ENCODE measurements at regions of chr6 and their contacts with region 1.

Region 1: GRCh38 chr6:81752138-81752920 is at the start of gene TENT5A:
- DNase-seq: peak; percentile 93 to 95
- ATAC-seq: peak; percentile 88 to 90 (median 90)
- H3K4me3 ChIP-seq: peak within 1 kb of the TSS; percentile 75
- H3K27ac ChIP-seq: peak within 1 kb of the TSS; percentile 88
- H3K4me1 ChIP-seq: peaks cover 22% of the 10 kb centered on the region
- H3K27me3 ChIP-seq: no peaks in the 10 kb centered on the region
- CTCF ChIP-seq: no peak
- total RNA-seq, gene TENT5A: 2.1 to 4.3 (median 2.6) TPM

Region 2: DNA sequence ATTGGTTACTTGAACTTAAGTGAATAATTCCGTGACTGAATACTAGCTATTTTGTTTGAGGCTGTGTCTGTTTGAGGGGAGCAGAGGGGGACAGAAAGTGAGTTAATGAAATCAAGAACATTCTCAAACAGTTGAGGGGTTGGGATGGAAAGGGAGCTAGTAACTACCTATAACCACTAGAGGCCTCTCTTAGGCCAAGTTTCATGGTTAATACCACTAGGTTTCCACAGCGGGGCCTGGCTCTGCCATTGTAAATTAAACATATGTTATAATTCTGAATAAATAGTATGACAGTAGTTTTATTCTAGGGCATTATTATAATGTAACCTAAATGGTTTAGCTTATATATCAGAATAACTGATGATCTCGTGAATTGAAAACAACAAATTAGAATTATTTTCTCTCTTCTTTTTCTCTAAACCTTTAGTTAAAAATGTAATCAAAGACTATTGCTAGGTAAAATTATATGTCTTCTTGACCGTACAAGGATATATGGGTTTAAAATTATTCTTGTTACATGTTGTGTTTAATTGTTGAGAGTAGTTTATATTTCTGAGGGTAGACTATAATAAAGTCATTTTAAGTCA is 1537.8 kb before region 1 on chr6:
- intact Hi-C with region 1: loop called in 1 of 2 experiments (anchors 10 kb)
- DNase-seq: no peak
- ATAC-seq: peak; percentile 66 to 93 (median 85)
- H3K4me3 ChIP-seq: no peak overlapping the region
- H3K27ac ChIP-seq: no peak overlapping the region
- H3K4me1 ChIP-seq: peaks cover 14% of the 10 kb centered on the region
- H3K27me3 ChIP-seq: no peaks in the 10 kb centered on the region
- CTCF ChIP-seq: peak; percentile 79

Region 3: DNA sequence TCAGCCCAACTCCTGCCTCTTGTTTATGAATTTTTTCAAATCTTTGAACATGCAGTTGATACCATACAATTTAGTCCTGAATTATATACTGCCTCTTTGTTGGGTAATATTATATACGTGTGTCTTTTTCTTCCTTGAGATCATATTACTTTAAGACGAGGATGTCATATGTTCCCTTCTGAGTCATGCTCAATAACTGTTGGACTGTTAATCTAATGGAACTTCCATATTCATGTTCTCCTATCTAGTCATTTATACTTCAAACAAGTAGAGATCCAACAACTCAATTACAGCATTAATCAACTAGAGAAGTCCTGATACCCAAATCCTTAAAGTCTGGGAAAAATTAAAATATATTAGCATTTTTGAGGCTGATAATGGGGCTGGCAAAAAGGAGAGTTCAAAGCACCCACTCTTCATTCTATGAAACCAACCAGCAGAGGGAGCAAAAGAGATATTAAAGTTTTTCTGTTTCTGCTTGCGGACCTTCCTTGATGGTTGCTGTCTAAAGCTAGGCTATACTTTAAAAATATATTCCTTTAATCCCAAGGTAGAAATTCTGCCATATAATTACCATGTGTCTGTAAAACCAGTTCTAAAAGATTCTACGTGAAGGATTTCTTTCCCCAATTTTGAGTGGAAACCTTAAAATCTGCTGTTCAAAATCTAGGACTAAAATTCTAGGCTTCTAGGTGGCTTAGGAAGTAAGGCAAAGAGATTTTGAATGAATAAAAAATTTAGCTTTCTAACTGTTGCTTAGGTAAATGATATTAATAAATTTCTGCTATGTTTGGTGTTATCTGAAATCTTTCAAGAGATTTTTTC is 1147.0 kb before region 1 on chr6:
- intact Hi-C with region 1: loop called (anchors 5 kb)
- DNase-seq: no peak
- ATAC-seq: peak in 1 of 4 donors; percentile 65
- H3K4me3 ChIP-seq: no peak overlapping the region
- H3K27ac ChIP-seq: no peak overlapping the region
- H3K4me1 ChIP-seq: peaks cover 12% of the 10 kb centered on the region
- H3K27me3 ChIP-seq: no peaks in the 10 kb centered on the region
- CTCF ChIP-seq: peak; percentile 65

Region 4: GRCh38 chr6:81683928-81684327 is 68.4 kb before region 1 on chr6:
- intact Hi-C with region 1: no loop called
- DNase-seq: no peak
- ATAC-seq: no peak
- H3K4me3 ChIP-seq: no peak overlapping the region
- H3K27ac ChIP-seq: no peak overlapping the region
- H3K4me1 ChIP-seq: no peaks in the 10 kb centered on the region
- H3K27me3 ChIP-seq: no peaks in the 10 kb centered on the region
- CTCF ChIP-seq: no peak

Region 5: GRCh38 chr6:81696482-81696881 is 55.8 kb before region 1 on chr6:
- intact Hi-C with region 1: loop called in 1 of 2 experiments (anchors 5 kb)
- DNase-seq: no peak
- ATAC-seq: peak in 3 of 4 donors; percentile 49 to 67 (median 65)
- H3K4me3 ChIP-seq: no peak overlapping the region
- H3K27ac ChIP-seq: no peak overlapping the region
- H3K4me1 ChIP-seq: peaks cover 12% of the 10 kb centered on the region
- H3K27me3 ChIP-seq: no peaks in the 10 kb centered on the region
- CTCF ChIP-seq: no peak

Measured in psoas muscle (tissue), 8 donors.